PC-9 (cell line): ENCODE measurements at regions of chrX and their contacts with region 1.

Region 1: GRCh38 chrX:154378782-154379591 is at the start of gene EMD:
- DNase-seq: peak; percentile 86 to 100
- H3K4me3 ChIP-seq: peak within 1 kb of the TSS; percentile 57
- H3K27ac ChIP-seq: peak within 1 kb of the TSS; percentile 61
- H3K4me1 ChIP-seq: no peaks in the 10 kb centered on the region
- H3K27me3 ChIP-seq: no peaks in the 10 kb centered on the region
- CTCF ChIP-seq: no peak
- total RNA-seq, gene EMD: 132 and 164 TPM in 2 replicates

Region 2: GRCh38 chrX:153599192-153600031 is 779.6 kb before region 1 on chrX:
- CTCF ChIA-PET with region 1: no interaction called
- POLR2A ChIA-PET with region 1: no interaction called
- intact Hi-C with region 1: loop called (anchors 5 kb)
- DNase-seq: peak; percentile 76 to 96
- H3K4me3 ChIP-seq: peak overlapping the region; percentile 68
- H3K27ac ChIP-seq: no peak overlapping the region
- H3K4me1 ChIP-seq: peaks cover 15% of the 10 kb centered on the region; the same call in 1 of the 2 replicates
- H3K27me3 ChIP-seq: no peaks in the 10 kb centered on the region
- CTCF ChIP-seq: no peak

Region 3: GRCh38 chrX:153971450-153972367 is 407.3 kb before region 1 on chrX and contains the start of gene HCFC1:
- CTCF ChIA-PET with region 1: no interaction called
- POLR2A ChIA-PET with region 1: no interaction called
- intact Hi-C with region 1: loop called (anchors 1 kb)
- DNase-seq: peak; percentile 75 to 90
- H3K4me3 ChIP-seq: peak within 1 kb of the TSS; percentile 92
- H3K27ac ChIP-seq: peak within 1 kb of the TSS; percentile 99
- H3K4me1 ChIP-seq: peaks cover 13% of the 10 kb centered on the region
- H3K27me3 ChIP-seq: no peaks in the 10 kb centered on the region
- CTCF ChIP-seq: no peak
- total RNA-seq, gene HCFC1: 67.1 and 79.9 TPM in 2 replicates

Region 4: DNA sequence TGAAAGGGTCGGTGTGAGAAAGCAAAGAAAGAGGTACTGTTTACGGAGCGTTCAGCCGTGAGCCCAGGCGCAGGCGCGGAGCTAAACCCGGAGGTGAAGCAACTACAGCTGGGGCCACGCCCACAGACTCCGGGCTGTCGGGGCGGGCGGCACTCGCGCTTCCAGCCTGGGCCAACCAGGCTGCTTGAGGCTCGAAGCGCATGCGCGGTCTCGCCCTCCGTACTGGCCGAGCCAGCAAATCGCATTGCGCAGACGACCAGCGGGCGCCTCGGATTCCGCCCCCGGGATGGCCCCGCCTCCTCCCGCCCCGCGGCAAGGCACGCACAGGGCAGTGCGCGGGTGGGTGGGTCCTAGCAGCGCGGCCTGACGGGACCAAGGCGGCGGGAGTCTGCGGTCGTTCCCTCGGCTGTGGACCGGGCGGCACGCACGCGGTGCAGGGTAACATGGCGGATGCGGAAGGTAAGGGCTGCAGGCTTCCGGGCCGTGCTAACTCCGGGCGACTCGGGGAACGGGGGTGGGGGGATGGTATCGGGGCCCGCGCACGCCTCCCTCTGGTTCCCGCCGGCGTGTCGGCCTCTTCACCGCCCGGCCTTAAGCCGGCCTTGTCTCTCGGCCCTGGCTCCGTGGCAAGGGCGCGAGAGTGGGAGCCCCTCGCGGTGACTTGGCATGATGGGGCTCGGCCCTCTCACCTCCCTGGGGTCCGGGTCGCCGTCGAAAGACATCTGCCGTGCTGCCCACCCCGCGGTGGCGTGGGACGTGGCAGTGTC is 383.7 kb after region 1 on chrX and contains the start of gene DKC1:
- CTCF ChIA-PET with region 1: no interaction called
- POLR2A ChIA-PET with region 1: no interaction called
- intact Hi-C with region 1: loop called (anchors 10 kb)
- DNase-seq: peak; percentile 89 to 99
- H3K4me3 ChIP-seq: peak within 1 kb of the TSS; percentile 89
- H3K27ac ChIP-seq: peak within 1 kb of the TSS; percentile 77
- H3K4me1 ChIP-seq: peaks cover 15% of the 10 kb centered on the region
- H3K27me3 ChIP-seq: no peaks in the 10 kb centered on the region
- CTCF ChIP-seq: 0 out of 2 replicates have a peak, but pooled peaks have one; percentile 6
- total RNA-seq, gene DKC1: 83.5 and 101 TPM in 2 replicates

Region 5: DNA sequence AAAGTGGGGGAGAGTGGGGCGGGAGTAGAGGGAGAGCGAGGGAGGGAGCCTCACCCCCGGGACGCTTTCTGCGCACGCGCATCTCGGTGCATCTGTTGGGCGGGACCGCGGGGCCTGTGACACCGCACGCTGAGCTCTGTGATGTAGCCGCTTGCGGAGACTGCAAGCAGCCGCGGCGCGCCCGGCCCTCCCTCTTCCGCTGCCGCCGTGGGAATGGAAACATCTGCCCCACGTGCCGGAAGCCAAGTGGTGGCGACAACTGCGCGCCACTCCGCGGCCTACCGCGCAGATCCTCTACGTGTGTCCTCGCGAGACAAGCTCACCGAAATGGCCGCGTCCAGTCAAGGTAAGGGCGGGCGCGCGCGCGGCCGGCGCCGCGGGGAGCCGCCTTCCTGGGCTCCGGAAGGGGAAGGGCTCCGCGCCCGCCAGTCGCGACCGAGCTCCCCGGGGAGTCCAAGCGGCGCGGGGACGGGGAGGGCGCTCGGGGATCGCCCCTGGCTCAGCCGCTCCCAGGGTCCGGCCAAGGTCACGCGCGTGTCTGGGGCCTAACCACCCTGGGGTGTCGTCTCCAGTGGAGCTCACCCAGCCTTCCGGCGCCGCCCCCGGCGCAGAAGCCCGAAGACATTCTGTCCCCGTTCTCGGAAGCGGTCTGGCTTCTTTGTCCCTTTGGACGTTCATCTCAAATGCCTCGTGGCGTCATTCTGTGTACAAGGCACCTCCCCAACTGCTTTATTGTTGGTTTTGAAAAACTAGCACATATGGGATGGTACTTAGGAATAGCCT is 647.9 kb after region 1 on chrX and contains the start of gene FUNDC2:
- CTCF ChIA-PET with region 1: no interaction called
- POLR2A ChIA-PET with region 1: no interaction called
- intact Hi-C with region 1: loop called (anchors 10 kb)
- DNase-seq: peak; percentile 57 to 98
- H3K4me3 ChIP-seq: peak within 1 kb of the TSS; percentile 94
- H3K27ac ChIP-seq: peak within 1 kb of the TSS; percentile 96
- H3K4me1 ChIP-seq: peaks cover 13% of the 10 kb centered on the region
- H3K27me3 ChIP-seq: no peaks in the 10 kb centered on the region
- CTCF ChIP-seq: no peak
- total RNA-seq, gene FUNDC2: 90.6 and 108 TPM in 2 replicates